Activated naive CD4-positive, alpha-beta T cell treated with anti-CD3 and anti-CD28 coated beads for 36 hours (primary cell): ENCODE measurements at regions of chr17 and their contacts with region 1.

Region 1: GRCh38 chr17:62065598-62066468 is 755 bp upstream of the MED13 start:
- DNase-seq: peak; percentile 99
- H3K4me3 Mint-ChIP-seq: peak overlapping the region; percentile 95
- H3K27ac Mint-ChIP-seq: peak overlapping the region; percentile 98
- H3K4me1 Mint-ChIP-seq: peaks cover 28% of the 10 kb centered on the region
- H3K27me3 Mint-ChIP-seq: no peaks in the 10 kb centered on the region

Region 2: GRCh38 chr17:61635913-61636432 is 429.9 kb before region 1 on chr17:
- CTCF ChIA-PET with region 1: no interaction called
- intact Hi-C with region 1: loop called (anchors 1 kb)
- DNase-seq: peak; percentile 78
- H3K4me3 Mint-ChIP-seq: no peak overlapping the region
- H3K27ac Mint-ChIP-seq: no peak overlapping the region
- H3K4me1 Mint-ChIP-seq: no peaks in the 10 kb centered on the region
- H3K27me3 Mint-ChIP-seq: peaks cover 41% of the 10 kb centered on the region

Region 3: DNA sequence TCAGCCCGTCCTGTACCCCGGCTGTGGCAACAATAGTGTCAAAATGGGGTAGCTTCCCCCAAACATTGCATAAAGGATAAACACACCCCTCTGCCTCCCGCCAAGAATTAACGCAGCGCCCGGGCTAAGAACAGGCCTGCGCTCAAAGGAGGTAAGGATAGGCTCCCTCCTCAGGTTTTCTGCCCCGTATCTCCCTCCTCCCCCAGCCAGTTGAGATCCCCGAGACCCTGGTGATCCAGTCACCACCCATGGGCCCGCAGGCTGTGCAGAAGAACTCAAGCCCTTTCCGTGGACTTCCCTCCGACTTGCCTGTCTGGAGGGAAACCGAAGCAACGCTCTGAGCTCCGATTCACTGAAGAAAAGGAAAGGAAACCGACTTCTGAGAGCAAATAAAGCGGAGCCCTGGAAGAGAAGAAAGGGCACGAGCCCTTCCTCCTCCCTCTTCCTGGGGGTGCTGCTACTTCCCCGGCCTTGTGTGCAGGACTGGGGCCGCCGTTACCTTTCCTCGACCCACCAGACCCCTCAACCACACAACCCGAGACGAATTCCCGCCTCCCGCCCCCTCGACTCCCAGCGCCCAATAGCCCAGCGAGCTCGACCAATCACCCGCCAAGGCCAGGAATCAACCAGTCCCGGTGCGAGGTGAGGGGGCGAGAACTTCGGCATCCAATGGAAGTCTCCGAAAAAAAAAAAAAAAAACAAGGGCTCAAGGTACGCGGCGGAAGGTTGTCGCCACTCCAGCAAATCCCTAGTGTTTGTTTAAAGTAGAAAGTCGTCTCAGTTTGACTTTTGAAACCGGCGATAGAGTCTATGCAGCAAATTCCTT is 202.6 kb before region 1 on chr17 and contains the start of gene BRIP1:
- CTCF ChIA-PET with region 1: interaction called, 5 read pairs
- intact Hi-C with region 1: loop called (anchors 1 kb)
- DNase-seq: peak; percentile 95
- H3K4me3 Mint-ChIP-seq: peak within 1 kb of the TSS; percentile 99
- H3K27ac Mint-ChIP-seq: peak within 1 kb of the TSS; percentile 89
- H3K4me1 Mint-ChIP-seq: peaks cover 22% of the 10 kb centered on the region
- H3K27me3 Mint-ChIP-seq: no peaks in the 10 kb centered on the region
- total RNA-seq, gene BRIP1: 12.0 to 12.9 TPM

Region 4: DNA sequence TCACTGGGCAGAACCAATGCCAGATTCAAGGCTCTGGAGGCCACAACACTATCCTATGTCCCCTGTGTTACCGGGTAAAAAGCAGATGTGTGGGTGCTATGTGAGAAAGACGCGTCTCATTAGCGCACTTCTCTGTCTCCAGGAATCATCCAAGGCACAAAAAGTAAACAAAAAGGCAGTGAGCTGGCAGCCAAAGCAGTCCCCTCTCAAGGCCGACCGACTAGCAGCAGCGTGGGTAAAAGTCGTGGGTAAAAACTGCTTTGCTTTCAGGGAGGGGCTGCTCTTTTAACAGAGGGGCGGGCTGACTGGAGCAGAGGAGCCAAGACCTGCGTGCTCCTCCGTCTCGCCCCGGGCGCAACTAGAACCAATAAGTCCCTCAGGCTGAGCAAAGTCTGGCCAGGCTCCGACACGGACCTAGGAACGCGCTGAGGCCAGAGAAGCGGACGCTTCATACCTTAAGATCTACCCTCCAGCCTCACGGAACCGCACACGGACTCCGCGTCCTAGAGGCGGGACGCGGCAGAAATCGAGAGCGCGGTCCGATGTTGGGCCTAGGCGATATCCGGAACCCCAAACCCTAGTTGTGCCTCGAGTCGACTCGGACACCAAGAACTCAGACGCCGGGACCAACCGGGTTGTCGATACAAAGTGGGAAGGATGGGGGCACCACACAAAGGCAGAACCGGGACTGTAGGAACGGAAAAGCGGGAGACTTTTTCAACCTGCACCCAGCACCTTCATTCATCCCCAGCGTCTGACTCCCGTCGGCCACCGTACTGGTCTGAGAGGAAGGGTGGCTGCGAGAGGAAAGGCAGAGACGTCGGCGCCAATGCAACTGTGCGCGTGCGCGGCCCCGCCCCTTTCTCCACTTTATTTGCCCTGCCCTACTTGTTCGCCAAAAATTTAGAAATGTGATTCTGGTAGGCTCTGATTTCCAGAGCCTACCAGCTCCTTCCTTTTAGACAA is 138.3 kb before region 1 on chr17 and contains the start of gene INTS2:
- CTCF ChIA-PET with region 1: interaction called, 3 read pairs
- intact Hi-C with region 1: loop called (anchors 1 kb)
- DNase-seq: peak; percentile 97
- H3K4me3 Mint-ChIP-seq: peak within 1 kb of the TSS; percentile 95
- H3K27ac Mint-ChIP-seq: peak within 1 kb of the TSS; percentile 89
- H3K4me1 Mint-ChIP-seq: peaks cover 17% of the 10 kb centered on the region
- H3K27me3 Mint-ChIP-seq: no peaks in the 10 kb centered on the region
- total RNA-seq, gene INTS2: 23.2 to 25.0 TPM

Region 5: DNA sequence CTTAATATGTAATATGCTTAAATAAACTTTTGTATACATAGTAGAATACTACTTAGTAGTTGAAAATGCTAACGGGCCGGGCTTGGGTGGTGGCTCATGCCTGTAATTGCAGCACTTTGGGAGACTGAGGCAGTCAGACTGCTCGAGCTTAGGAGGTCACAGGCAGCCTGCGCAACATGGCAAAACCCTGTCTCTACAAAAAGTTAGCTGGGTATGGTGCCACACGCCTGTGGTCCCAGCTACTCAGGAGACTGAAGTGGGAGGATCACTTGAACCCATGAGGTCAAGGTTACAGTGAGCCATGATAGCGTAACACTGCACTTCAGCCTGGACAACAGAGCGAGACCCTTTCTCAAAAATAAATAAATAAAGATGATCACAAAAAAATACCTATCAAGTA is 91.8 kb before region 1 on chr17:
- CTCF ChIA-PET with region 1: no interaction called
- intact Hi-C with region 1: loop called (anchors 2 kb)
- DNase-seq: no peak
- H3K4me3 Mint-ChIP-seq: no peak overlapping the region
- H3K27ac Mint-ChIP-seq: no peak overlapping the region
- H3K4me1 Mint-ChIP-seq: peaks cover 17% of the 10 kb centered on the region
- H3K27me3 Mint-ChIP-seq: no peaks in the 10 kb centered on the region

Region 6: GRCh38 chr17:62017610-62018261 is 48.1 kb before region 1 on chr17:
- CTCF ChIA-PET with region 1: no interaction called
- intact Hi-C with region 1: no loop called
- DNase-seq: no peak
- H3K4me3 Mint-ChIP-seq: no peak overlapping the region
- H3K27ac Mint-ChIP-seq: no peak overlapping the region
- H3K4me1 Mint-ChIP-seq: no peaks in the 10 kb centered on the region
- H3K27me3 Mint-ChIP-seq: no peaks in the 10 kb centered on the region

Region 7: GRCh38 chr17:62109378-62109902 is 43.6 kb after region 1 on chr17:
- CTCF ChIA-PET with region 1: interaction called, 4 read pairs
- intact Hi-C with region 1: loop called (anchors 2 kb)
- DNase-seq: peak; percentile 78
- H3K4me3 Mint-ChIP-seq: no peak overlapping the region
- H3K27ac Mint-ChIP-seq: no peak overlapping the region
- H3K4me1 Mint-ChIP-seq: no peaks in the 10 kb centered on the region
- H3K27me3 Mint-ChIP-seq: no peaks in the 10 kb centered on the region